Activated T-helper 1 cell treated with anti-CD3 and anti-CD28 coated beads, Interleukin-12 subunit alpha, Interleukin-12 subunit beta, Interleukin-2, Interleukin-4 antibody, amounts not matched to agents 30 ng/mL and 10 ng/mL and 1 ng/mL, durations not matched to agents 14 hours and 24 hours and 36 hours (primary cell): ENCODE measurements at regions of chr17 and their contacts with region 1.

Region 1: GRCh38 chr17:1455797-1456599 is at the start of gene CRK:
- DNase-seq: peak; percentile 99
- H3K4me3 Mint-ChIP-seq: peak within 1 kb of the TSS; percentile 92
- H3K27ac Mint-ChIP-seq: peak within 1 kb of the TSS; percentile 90
- H3K4me1 Mint-ChIP-seq: peaks cover 29% of the 10 kb centered on the region
- H3K27me3 Mint-ChIP-seq: peaks cover 13% of the 10 kb centered on the region
- total RNA-seq, gene CRK: 19.8 and 24.2 TPM in 2 replicates

Region 2: DNA sequence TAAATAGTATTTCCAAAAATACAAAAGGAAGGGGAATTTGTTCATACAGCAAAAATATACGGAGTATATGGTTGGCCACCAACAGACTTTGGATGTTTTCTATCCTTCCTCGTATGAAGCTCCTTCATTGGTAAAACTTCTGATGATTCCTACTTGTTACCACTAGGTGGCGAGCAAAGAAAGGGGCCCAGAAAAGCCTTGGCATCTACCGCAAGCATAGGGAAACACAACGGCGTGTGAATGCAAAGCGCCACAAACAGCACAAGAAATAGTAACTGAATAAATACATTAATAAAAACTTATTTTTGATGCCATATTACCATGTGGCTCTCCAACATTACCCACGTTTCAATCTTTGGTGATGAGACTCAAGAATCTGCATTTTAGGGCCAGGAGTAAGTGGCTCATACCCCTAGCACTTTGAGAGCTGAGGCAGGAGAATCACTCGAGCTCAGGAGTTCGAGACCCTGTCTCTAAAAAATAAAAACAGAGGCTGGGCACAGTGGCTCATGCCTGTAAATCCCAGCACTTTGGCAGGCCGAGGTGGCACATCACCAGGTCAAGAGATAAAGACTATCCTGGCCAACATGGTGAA is 90.5 kb before region 1 on chr17:
- intact Hi-C with region 1: loop called (anchors 1 kb)
- DNase-seq: peak; percentile 48
- H3K4me3 Mint-ChIP-seq: no peak overlapping the region
- H3K27ac Mint-ChIP-seq: no peak overlapping the region
- H3K4me1 Mint-ChIP-seq: peaks cover 47% of the 10 kb centered on the region
- H3K27me3 Mint-ChIP-seq: no peaks in the 10 kb centered on the region

Region 3: GRCh38 chr17:1399679-1400512 is 56.1 kb before region 1 on chr17 and contains the start of gene YWHAE:
- intact Hi-C with region 1: loop called (anchors 1 kb)
- DNase-seq: peak; percentile 95
- H3K4me3 Mint-ChIP-seq: peak within 1 kb of the TSS; percentile 97
- H3K27ac Mint-ChIP-seq: peak within 1 kb of the TSS; percentile 98
- H3K4me1 Mint-ChIP-seq: peaks cover 21% of the 10 kb centered on the region
- H3K27me3 Mint-ChIP-seq: peaks cover 5% of the 10 kb centered on the region
- total RNA-seq, gene YWHAE: 439 and 444 TPM in 2 replicates

Region 4: DNA sequence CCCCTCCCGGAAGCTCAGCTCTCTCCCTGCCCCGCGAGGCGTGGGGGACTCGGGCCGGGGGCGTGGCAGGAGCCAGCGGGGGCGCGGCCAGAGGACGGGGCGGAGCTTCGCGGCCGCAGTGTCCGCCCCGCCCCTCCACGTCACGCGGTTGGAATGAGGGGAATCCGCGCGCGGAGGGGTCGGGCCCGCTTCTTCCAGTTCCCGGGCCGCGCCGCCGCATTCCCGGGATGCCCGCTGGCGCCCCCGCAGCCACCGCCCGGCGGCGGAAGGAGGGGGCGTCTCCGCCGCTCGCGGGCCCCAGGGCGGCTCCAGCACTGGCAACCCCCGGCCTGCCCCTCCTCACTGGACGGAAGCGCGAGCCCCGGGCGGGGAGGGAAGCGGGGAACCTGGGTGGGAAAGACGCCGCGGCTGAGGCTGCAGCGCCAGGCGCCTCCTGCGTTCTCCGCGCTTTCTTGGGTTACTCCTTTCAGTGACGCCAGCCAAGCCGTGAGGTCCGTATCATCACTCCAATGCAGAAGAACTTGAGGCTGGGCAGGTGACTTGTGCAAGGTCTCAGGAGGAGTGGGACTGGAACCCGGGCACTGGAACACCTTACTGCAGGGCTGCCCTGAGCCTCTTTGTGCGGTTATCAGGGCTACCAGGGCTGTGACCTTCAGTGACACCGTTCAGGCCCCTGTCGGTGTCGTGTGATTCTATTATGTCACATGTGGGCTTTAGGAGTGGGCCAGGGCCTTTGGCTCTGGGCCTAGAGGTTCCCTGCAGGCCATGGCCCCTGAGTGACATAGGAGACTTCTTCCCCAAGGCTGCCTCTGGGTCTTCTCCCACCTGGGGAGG is 32.2 kb after region 1 on chr17:
- intact Hi-C with region 1: loop called (anchors 1 kb)
- DNase-seq: peak; percentile 64
- H3K4me3 Mint-ChIP-seq: peak overlapping the region; percentile 84
- H3K27ac Mint-ChIP-seq: no peak overlapping the region
- H3K4me1 Mint-ChIP-seq: peaks cover 24% of the 10 kb centered on the region
- H3K27me3 Mint-ChIP-seq: peaks cover 5% of the 10 kb centered on the region

Region 5: GRCh38 chr17:1561400-1562175 is 105.6 kb after region 1 on chr17:
- intact Hi-C with region 1: loop called (anchors 2 kb)
- DNase-seq: peak; percentile 27
- H3K4me3 Mint-ChIP-seq: peak overlapping the region; percentile 88
- H3K27ac Mint-ChIP-seq: peak overlapping the region; percentile 61
- H3K4me1 Mint-ChIP-seq: peaks cover 40% of the 10 kb centered on the region
- H3K27me3 Mint-ChIP-seq: peaks cover 11% of the 10 kb centered on the region

Region 6: DNA sequence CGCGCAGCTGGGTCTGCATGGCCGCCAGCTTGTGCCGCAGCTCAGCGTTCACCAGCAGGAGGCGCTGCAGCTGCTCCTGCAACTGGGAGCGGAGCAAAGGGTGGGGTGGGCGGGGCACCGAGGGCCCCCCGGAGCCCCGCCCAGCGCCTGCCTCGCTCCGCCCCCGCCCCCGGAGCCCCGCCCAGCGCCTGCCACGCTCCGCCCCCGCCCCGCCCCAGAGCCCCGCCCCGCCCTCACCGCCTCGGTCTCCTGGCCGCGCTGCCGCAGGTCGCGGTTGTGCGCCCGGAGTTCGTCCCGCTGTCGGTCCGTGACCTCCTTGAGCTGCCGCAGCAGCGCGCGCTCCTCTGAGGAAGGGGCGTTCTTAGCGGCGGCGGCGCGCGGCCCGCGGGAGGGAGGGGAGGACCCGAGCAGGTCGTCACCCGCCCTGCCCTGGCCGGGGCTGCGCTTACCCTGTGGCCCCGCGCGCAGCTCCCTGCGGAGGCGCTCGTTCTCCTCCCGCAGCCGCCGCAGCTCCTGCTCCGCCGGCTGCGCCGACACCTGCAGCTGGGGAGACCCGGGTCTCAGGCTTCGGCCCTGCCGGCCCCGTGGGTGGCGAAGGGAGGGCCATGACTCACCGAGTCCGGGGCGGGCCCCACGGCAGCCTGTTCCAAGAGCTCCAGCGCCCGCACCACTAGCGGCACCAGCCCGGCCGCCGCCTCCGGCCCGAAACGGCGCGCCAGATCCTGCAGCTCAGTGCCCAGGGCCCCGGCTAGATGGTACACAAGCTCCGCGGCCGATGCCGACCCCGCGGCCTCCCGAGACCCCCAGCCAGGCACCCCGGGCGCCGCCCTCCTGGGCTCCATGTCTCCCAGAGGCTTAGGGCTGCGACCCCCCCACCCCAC is 193.2 kb after region 1 on chr17:
- intact Hi-C with region 1: loop called (anchors 2 kb)
- DNase-seq: peak; percentile 92
- H3K4me3 Mint-ChIP-seq: peak overlapping the region; percentile 59
- H3K27ac Mint-ChIP-seq: no peak overlapping the region
- H3K4me1 Mint-ChIP-seq: peaks cover 22% of the 10 kb centered on the region
- H3K27me3 Mint-ChIP-seq: peaks cover 2% of the 10 kb centered on the region